Heart right ventricle (tissue), 16 donors: ENCODE measurements at regions of chr15 and their contacts with region 1.

Region 1: DNA sequence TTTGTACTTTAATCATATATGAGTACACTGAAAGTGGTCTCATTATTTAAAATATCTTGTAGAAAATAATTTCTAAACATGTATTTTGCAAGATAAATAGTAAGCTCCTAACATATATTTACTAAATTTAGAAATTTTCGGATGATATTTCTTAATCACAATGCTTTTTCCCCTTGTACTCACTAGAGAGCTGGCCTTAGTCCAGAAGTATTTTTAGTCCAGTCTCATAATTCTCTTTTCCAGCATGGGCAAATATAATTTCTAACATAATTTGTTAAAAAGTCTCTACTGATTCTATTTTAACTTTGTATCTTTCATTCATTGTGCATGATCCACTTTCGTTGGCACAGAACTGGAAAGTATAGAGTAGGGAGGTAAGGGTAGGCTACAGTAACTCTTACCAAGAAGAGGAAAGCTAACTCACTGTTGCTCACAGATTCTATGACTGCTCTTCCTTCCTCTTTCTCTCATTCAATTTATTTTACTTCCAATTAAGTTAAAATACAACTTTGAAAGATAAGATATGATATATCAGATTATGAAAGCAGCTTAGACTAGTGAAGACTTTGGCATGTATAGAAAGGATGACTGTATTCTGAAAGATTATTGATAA is 39.3 kb downstream of the FGF7 start:
- DNase-seq: no peak
- ATAC-seq: peak in 3 of 8 donors; percentile 42 to 51 (median 43)
- H3K4me3 ChIP-seq: no peak overlapping the region
- H3K27ac ChIP-seq: peak overlapping the region in 6 of 10 donors; percentile 10 to 48 (median 28)
- H3K4me1 ChIP-seq: peaks cover 0 to 48% (median 30%) of the 10 kb centered on the region in 9 donors
- H3K27me3 ChIP-seq: no peaks in the 10 kb centered on the region
- CTCF ChIP-seq: no peak

Region 2: GRCh38 chr15:49265911-49266310 is 196.4 kb before region 1 on chr15:
- intact Hi-C with region 1: no loop called
- DNase-seq: no peak
- ATAC-seq: no peak
- H3K4me3 ChIP-seq: no peak overlapping the region
- H3K27ac ChIP-seq: no peak overlapping the region
- H3K4me1 ChIP-seq: peaks cover 0 to 9% (median 0%) of the 10 kb centered on the region in 9 donors
- H3K27me3 ChIP-seq: no peaks in the 10 kb centered on the region
- CTCF ChIP-seq: no peak

Region 3: DNA sequence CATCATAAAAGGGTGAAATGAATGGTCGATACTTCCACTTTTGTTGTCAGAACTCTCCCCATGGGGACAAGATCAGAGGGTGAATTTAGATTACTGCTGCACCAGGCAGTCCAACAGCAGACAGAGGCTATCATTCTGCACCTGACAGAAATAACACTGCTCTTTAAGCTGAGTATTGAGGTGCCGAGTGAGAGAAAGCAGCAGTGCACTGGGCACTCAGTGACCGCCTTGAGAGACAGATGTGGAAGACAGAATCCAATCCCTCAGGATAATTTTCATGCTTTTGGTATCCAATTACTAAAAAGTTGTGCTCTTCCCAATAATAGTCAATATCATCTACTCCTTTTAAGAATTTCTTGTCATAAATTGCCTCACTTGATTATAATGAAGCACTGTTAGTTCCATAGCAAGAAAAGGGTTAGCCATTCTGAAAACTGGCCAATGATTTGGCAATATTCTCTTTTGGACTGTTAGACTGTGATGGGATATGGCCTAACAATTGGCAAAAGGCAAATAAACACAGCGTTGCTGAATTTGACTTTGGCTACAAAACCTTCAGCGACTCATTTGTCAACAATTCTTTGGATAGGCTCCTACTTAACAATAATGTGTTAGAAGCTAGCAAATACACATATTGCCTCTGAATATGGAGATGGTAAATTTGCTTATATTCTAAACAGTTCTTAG is 33.8 kb before region 1 on chr15:
- intact Hi-C with region 1: loop called in 1 of 10 experiments (anchors 5 kb)
- DNase-seq: peak; percentile 29 to 71
- ATAC-seq: peak; percentile 79 to 97 (median 95)
- H3K4me3 ChIP-seq: peak overlapping the region in 8 of 10 donors; percentile 19 to 56 (median 24)
- H3K27ac ChIP-seq: peak overlapping the region; percentile 15 to 81 (median 72)
- H3K4me1 ChIP-seq: peaks cover 0 to 25% (median 8%) of the 10 kb centered on the region in 9 donors
- H3K27me3 ChIP-seq: no peaks in the 10 kb centered on the region
- CTCF ChIP-seq: no peak